Lower leg skin (tissue), 4 donors: ENCODE measurements at regions of chr12 and their contacts with region 1.

Region 1: DNA sequence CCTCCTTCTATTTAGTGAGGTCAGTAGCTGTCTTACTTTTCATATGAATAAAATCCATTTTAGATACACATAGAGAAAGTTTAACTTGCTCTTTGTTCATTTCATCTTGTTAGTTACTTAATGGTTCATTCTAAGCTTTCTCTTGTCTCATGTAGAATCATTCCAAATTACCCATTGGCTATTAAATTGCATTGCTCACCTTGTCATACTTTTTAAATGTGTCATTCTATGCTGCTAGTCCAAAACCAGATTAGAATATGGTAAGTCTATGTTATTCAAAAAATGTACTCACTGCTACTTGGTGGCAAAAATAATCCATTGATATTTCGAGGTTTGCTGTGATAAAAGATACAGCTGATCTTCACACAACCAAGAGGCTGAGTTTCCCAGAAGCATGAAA is 3.0 kb downstream of the C12orf50 start:
- DNase-seq: no peak
- H3K4me3 ChIP-seq: no peak overlapping the region
- CTCF ChIP-seq: no peak
- POLR2A ChIP-seq: no peak

Region 2: GRCh38 chr12:87995581-87996178 is 30.5 kb before region 1 on chr12:
- intact Hi-C with region 1: loop called (anchors 2 kb)
- DNase-seq: peak in 1 of 2 donors; percentile 52
- H3K4me3 ChIP-seq: no peak overlapping the region
- CTCF ChIP-seq: no peak
- POLR2A ChIP-seq: no peak